ENCODE measurements at regions of chr5 and their contacts with region 1.

Region 1: DNA sequence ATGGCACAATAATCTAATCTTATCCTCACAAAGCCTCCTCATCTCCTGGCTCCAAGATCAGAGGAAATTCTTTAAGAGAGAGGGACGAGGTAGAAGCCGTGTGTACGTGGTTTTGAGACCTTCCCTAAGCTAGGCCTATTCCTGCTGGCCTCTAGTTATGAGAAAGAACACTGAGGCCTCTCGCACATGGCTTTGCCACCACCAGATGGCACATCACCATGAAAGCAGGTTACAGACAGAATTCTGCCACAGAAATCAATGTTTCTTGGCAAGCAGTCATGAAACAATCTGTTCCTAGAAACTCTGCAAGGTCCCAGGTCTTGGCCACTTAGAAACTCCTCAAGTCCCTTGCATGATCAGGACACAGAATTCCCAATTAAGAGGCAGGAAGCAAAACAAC is 268.2 kb upstream of the TAS2R1 start:
- DNase-seq: peak in 1 of 2 experiments; percentile 49
- H3K4me3 ChIP-seq: no peak overlapping the region
- H3K4me3 Mint-ChIP-seq: no peak overlapping the region
- H3K27ac Mint-ChIP-seq: no peak overlapping the region
- H3K4me1 ChIP-seq: no peaks in the 10 kb centered on the region
- H3K4me1 Mint-ChIP-seq: no peaks in the 10 kb centered on the region
- H3K27me3 ChIP-seq: no peaks in the 10 kb centered on the region
- H3K27me3 Mint-ChIP-seq: no peaks in the 10 kb centered on the region
- CTCF ChIP-seq: peak; percentile 55 to 76

Region 2: DNA sequence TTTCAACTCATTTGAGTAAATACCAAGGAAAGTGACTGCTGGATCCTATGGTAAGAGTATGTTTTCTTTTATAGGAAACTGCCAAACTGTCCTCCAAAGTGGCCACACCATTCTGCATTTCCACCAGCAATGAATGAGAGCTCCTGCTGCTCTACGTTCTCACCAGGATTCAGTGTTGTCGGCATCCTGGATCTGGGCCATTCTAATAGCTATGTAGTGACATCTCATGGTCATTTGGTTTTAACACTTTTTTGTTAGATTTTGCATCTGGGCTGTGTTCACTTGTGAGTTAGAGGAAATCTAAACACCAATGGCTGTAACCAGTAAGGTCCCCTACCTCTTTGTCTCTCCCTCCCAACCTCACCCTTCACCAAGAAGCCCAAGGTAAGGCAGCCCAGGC is 235.5 kb after region 1 on chr5:
- CTCF ChIA-PET with region 1: interaction called, 5 read pairs
- POLR2A ChIA-PET with region 1: no interaction called
- intact Hi-C with region 1: loop called (anchors 5 kb)
- DNase-seq: no peak
- H3K4me3 ChIP-seq: no peak overlapping the region
- H3K4me3 Mint-ChIP-seq: no peak overlapping the region
- H3K27ac Mint-ChIP-seq: no peak overlapping the region
- H3K4me1 ChIP-seq: no peaks in the 10 kb centered on the region
- H3K4me1 Mint-ChIP-seq: peaks cover 12% of the 10 kb centered on the region
- H3K27me3 ChIP-seq: no peaks in the 10 kb centered on the region
- H3K27me3 Mint-ChIP-seq: no peaks in the 10 kb centered on the region
- CTCF ChIP-seq: peak; percentile 6 to 16

Measured in Caco-2 (cell line).